A549 (cell line): ENCODE measurements at regions of chr2 and their contacts with region 1.

Region 1: DNA sequence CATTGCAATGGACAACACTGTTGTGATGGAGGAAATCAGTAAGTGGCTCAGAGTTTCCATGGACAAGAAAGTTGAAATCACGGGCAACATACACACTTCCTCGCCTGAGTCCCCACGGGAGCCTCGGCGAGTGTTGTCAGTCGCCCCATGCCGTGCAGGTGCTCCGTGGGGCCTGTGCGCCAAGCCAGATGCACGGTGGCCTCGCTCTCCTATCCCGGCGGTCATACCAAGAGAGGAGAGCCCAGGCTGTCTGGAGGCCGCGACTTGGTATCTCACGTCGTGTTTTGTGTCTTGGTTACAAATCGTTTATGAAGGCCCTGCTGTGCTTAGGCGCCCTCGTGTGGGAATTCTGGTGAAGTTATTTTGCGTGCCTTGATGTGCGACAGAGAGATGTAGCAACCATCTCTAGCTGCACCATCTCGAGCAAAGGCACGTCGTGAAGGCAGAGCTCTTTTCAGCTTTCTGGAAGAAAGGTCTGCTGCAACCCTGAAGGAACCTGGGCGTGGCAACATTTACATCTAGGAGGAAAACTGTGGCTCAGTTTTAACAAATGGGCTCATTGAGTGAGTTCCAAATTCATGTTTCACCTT is 21.8 kb downstream of the ATG4B start:
- DNase-seq: peak; percentile 27 to 82
- ATAC-seq: peak; percentile 83 to 87
- H3K4me3 ChIP-seq: no peak overlapping the region
- H3K27ac ChIP-seq: no peak overlapping the region
- H3K4me1 ChIP-seq: no peaks in the 10 kb centered on the region
- CTCF ChIP-seq: peak; percentile 64
- EP300 ChIP-seq: no peak
- POLR2A ChIP-seq: no peak
- RAD21 ChIP-seq: peak; percentile 67 to 76

Region 2: DNA sequence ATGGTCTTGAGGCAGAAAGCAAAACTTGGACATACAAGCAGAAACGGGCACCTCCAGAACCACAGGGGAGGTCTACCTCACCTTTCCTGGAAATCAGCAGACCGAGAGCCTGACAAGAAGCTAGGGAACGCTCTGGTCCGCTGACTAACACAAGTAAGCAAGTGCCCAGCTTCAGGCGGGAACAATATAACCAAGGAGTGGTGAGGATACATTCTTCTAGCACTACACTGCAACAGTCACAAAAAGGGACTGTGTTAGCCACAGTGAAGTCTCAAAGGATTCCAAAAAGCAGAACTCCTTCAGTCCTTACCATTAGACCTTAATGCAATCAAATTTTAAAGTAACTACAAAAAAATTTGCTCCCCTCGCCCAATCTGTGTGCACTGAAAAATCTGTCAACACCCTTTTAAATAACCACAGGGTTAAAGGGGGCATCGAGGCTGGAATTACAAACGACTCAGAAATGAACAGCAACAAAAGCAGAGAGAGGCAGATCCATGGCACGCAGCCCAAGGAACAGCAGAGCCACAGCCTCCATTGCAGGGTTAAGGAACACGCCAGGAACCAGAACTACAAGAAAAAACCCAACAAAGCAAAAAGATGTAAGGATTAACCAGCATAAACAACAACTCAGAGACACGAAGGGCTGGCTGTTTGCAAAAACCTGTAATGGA is 29.3 kb before region 1 on chr2:
- CTCF ChIA-PET with region 1: interaction called, 13 read pairs
- POLR2A ChIA-PET with region 1: no interaction called
- DNase-seq: no peak
- ATAC-seq: no peak
- H3K4me3 ChIP-seq: no peak overlapping the region
- H3K27ac ChIP-seq: no peak overlapping the region
- H3K4me1 ChIP-seq: peaks cover 2% of the 10 kb centered on the region; the same call in 1 of the 3 replicates
- CTCF ChIP-seq: no peak
- EP300 ChIP-seq: no peak
- POLR2A ChIP-seq: no peak
- RAD21 ChIP-seq: no peak

Region 3: GRCh38 chr2:241641631-241642030 is 17.6 kb before region 1 on chr2:
- CTCF ChIA-PET with region 1: interaction called, 44 read pairs
- POLR2A ChIA-PET with region 1: no interaction called
- DNase-seq: no peak
- ATAC-seq: no peak
- H3K4me3 ChIP-seq: no peak overlapping the region
- H3K27ac ChIP-seq: no peak overlapping the region
- H3K4me1 ChIP-seq: peaks cover 11% of the 10 kb centered on the region
- CTCF ChIP-seq: no peak
- EP300 ChIP-seq: no peak
- POLR2A ChIP-seq: no peak
- RAD21 ChIP-seq: no peak